ENCODE measurements at regions of chr5 and their contacts with region 1.

Region 1: GRCh38 chr5:131252824-131253171 is 11.1 kb upstream of the CDC42SE2 start:
- DNase-seq: peak; percentile 91 to 94 (median 94)
- H3K4me3 ChIP-seq: peak overlapping the region in 2 of 3 experiments; percentile 29 to 51
- H3K4me3 Mint-ChIP-seq: peak overlapping the region; percentile 20 to 86
- H3K27ac ChIP-seq: peak overlapping the region; percentile 87 to 91
- H3K27ac Mint-ChIP-seq: peak overlapping the region; percentile 82 to 96 (median 92)
- H3K4me1 ChIP-seq: peaks cover 67 to 72% of the 10 kb centered on the region in 2 donors
- H3K4me1 Mint-ChIP-seq: peaks cover 72% of the 10 kb centered on the region
- H3K27me3 ChIP-seq: no peaks in the 10 kb centered on the region
- H3K27me3 Mint-ChIP-seq: peaks cover 0 to 5% (median 0%) of the 10 kb centered on the region in 3 donors
- CTCF ChIP-seq: no peak

Region 2: DNA sequence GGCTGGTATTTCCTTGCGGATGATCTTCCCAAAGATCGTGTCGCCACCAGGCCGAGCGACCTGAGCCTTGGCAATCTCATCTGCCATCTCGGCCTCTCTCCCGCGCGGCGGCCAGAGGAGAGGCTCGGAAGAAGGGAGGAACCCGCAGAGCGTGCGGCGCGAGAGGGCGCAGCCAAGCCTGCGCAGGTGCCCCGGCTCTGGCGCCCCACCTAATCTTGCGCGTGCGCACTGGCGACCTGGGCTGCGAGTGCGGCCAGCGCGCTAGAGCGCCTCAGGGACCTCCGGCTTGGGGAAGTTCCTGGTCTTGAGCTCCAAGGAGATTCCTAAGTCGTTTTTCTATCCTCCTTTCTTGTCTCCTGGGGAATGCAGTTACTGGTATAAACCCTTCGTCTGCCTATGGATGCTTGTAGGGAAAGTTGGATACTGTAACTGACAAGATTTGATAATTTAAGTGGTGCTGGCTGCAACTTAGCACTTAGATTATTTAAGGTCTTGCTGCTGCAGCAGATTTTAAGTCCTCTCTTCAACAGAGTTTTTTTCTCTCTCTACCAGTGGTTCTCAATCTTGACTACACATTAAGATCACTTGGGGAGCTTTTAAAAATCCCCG is 87.6 kb before region 1 on chr5 and contains the start of gene HINT1:
- intact Hi-C with region 1: loop called (anchors 5 to 10 kb)
- DNase-seq: peak; percentile 79 to 87 (median 85)
- H3K4me3 ChIP-seq: peak within 1 kb of the TSS; percentile 60 to 93 (median 84)
- H3K4me3 Mint-ChIP-seq: peak within 1 kb of the TSS; percentile 94 to 95
- H3K27ac ChIP-seq: peak within 1 kb of the TSS; percentile 93 to 97
- H3K27ac Mint-ChIP-seq: peak within 1 kb of the TSS; percentile 89 to 95 (median 94)
- H3K4me1 ChIP-seq: peaks cover 24 to 33% of the 10 kb centered on the region in 2 donors
- H3K4me1 Mint-ChIP-seq: peaks cover 26% of the 10 kb centered on the region
- H3K27me3 ChIP-seq: no peaks in the 10 kb centered on the region
- H3K27me3 Mint-ChIP-seq: peaks cover 0 to 4% (median 0%) of the 10 kb centered on the region in 3 donors
- CTCF ChIP-seq: no peak
- polyA plus RNA-seq, gene HINT1: 148 to 223 (median 191) TPM

Region 3: GRCh38 chr5:131170540-131171275 is 82.1 kb before region 1 on chr5 and contains the start of gene LYRM7:
- intact Hi-C with region 1: loop called (anchors 5 to 10 kb)
- DNase-seq: peak; percentile 97 to 100 (median 97)
- H3K4me3 ChIP-seq: peak within 1 kb of the TSS; percentile 58 to 84 (median 59)
- H3K4me3 Mint-ChIP-seq: peak within 1 kb of the TSS; percentile 94 to 96
- H3K27ac ChIP-seq: peak within 1 kb of the TSS; percentile 61 to 86
- H3K27ac Mint-ChIP-seq: peak within 1 kb of the TSS; percentile 89 to 97 (median 95)
- H3K4me1 ChIP-seq: peaks cover 17 to 20% of the 10 kb centered on the region in 2 donors
- H3K4me1 Mint-ChIP-seq: peaks cover 28% of the 10 kb centered on the region
- H3K27me3 ChIP-seq: no peaks in the 10 kb centered on the region
- H3K27me3 Mint-ChIP-seq: peaks cover 0 to 4% (median 0%) of the 10 kb centered on the region in 3 donors
- CTCF ChIP-seq: no peak
- polyA plus RNA-seq, gene LYRM7: 3.1 to 3.7 (median 3.2) TPM

Region 4: DNA sequence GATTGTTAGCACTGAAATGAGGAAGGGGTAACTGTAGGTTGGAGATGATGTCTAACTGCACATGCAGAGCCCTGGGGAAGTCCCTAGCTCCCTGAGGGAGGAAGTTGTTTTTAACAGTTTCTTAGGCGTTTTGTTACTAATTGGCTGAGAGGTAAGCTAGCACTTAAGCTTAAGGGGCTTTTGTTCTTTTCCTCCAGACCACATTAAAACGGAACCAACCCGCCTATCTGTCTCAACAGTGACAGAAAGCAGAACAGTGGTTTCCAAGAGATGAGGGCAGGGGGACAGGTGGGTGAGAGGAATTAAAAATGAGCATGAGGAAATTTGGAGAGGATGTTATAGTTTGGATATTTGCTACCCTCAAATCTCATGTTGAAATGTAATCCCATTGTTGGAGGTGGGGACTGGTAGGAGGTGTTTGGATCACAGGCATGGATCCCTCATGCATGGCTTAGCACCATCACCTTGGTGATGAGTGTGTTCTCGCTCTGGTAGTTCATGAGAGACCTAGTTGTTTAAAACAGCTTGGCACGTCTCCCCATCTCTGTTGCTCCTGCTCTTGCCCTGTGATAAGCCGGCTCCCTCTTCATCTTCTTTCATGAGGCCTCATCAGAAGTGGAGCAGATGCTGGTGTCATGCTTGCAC is 43.2 kb before region 1 on chr5:
- intact Hi-C with region 1: loop called (anchors 5 kb)
- DNase-seq: peak; percentile 84 to 95 (median 91)
- H3K4me3 ChIP-seq: peak overlapping the region in 1 of 3 experiments; percentile 47
- H3K4me3 Mint-ChIP-seq: peak overlapping the region; percentile 40 to 57
- H3K27ac ChIP-seq: peak overlapping the region; percentile 78 to 83
- H3K27ac Mint-ChIP-seq: peak overlapping the region; percentile 90 to 97 (median 96)
- H3K4me1 ChIP-seq: peaks cover 58 to 60% of the 10 kb centered on the region in 2 donors
- H3K4me1 Mint-ChIP-seq: peaks cover 65% of the 10 kb centered on the region
- H3K27me3 ChIP-seq: no peaks in the 10 kb centered on the region
- H3K27me3 Mint-ChIP-seq: no peaks in the 10 kb centered on the region
- CTCF ChIP-seq: no peak

Region 5: GRCh38 chr5:131289738-131290137 is 36.9 kb after region 1 on chr5:
- intact Hi-C with region 1: loop called in 1 of 2 experiments (anchors 5 kb)
- DNase-seq: no peak
- H3K4me3 ChIP-seq: no peak overlapping the region
- H3K4me3 Mint-ChIP-seq: no peak overlapping the region
- H3K27ac ChIP-seq: peak overlapping the region in 1 of 2 donors; percentile 26
- H3K27ac Mint-ChIP-seq: peak overlapping the region in 1 of 7 donors; percentile 80
- H3K4me1 ChIP-seq: peaks cover 0 to 4% of the 10 kb centered on the region in 2 donors
- H3K4me1 Mint-ChIP-seq: peaks cover 22% of the 10 kb centered on the region
- H3K27me3 ChIP-seq: no peaks in the 10 kb centered on the region
- H3K27me3 Mint-ChIP-seq: no peaks in the 10 kb centered on the region
- CTCF ChIP-seq: no peak

Region 6: GRCh38 chr5:131548176-131548575 is 295.4 kb after region 1 on chr5:
- intact Hi-C with region 1: no loop called
- DNase-seq: no peak
- H3K4me3 ChIP-seq: no peak overlapping the region
- H3K4me3 Mint-ChIP-seq: no peak overlapping the region
- H3K27ac ChIP-seq: no peak overlapping the region
- H3K27ac Mint-ChIP-seq: peak overlapping the region in 1 of 7 donors; percentile 61
- H3K4me1 ChIP-seq: no peaks in the 10 kb centered on the region
- H3K4me1 Mint-ChIP-seq: peaks cover 3% of the 10 kb centered on the region
- H3K27me3 ChIP-seq: no peaks in the 10 kb centered on the region
- H3K27me3 Mint-ChIP-seq: no peaks in the 10 kb centered on the region
- CTCF ChIP-seq: no peak